ENCODE measurements at regions of chr15 and their contacts with region 1.

Region 1: DNA sequence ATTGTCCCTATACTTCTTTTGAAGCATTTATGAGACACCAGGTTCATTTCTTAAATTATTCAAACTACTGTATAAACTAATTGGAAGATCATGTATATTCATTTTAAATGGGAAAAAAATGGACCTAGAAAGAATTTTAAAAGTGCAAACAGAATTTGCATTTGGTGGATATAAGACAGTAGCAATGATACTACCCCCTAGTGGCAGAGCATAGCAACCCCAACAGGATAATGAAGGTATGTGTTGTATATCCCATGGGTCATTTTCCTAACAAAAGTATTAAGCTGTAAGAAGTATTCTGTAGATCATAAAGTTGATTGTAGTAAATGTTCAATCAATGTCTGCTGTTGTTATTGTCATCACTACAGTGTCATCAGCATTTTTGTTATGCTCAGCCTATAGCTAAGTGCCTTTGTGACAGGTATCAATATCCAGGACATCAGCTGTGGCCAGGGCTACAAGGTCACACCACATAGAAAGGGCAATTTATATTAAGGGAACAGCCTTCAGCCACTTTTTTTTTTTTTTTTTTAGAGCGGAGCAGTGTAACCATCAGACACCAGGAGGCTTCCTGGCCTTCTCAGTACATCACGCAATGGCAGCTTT is 175.8 kb downstream of the FOXB1 start:
- DNase-seq: no peak
- ATAC-seq: peak; percentile 75
- H3K4me3 ChIP-seq: no peak overlapping the region
- H3K27ac ChIP-seq: no peak overlapping the region
- H3K4me1 ChIP-seq: no peaks in the 10 kb centered on the region
- H3K27me3 ChIP-seq: peaks cover 4% of the 10 kb centered on the region
- CTCF ChIP-seq: peak; percentile 87

Region 2: DNA sequence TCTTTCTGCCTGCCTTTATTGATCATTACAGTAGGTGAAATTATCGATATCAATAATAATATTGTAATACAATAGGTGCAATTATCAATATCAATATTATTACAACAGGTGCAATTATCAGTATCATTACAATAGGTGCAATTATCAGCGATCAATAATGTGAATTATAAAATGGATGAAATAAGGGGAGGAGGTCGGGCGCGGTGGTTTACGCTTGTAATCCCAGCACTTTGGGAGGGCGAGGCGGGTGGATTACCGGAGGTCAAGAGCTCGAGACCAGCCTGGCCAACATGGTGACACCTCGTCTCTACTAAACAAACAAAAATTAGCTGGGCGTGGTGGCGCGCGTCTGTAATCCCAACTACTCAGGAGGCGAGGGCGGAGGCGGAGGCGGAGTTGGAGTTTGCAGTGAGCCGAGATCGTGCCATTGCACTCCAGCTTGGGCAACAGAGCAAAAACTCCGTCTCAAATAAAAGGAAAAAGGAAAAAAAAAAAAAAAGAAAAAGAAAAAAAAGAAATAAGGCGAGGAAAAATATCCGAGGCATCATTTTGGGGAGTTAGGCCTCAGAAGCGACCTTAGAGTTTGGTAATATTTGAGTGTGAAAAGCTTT is 490.2 kb before region 1 on chr15:
- intact Hi-C with region 1: loop called (anchors 10 kb)
- DNase-seq: peak; percentile 95
- ATAC-seq: peak; percentile 65
- H3K4me3 ChIP-seq: peak overlapping the region; percentile 94
- H3K27ac ChIP-seq: peak overlapping the region; percentile 99
- H3K4me1 ChIP-seq: peaks cover 34% of the 10 kb centered on the region
- H3K27me3 ChIP-seq: no peaks in the 10 kb centered on the region
- CTCF ChIP-seq: no peak

Region 3: DNA sequence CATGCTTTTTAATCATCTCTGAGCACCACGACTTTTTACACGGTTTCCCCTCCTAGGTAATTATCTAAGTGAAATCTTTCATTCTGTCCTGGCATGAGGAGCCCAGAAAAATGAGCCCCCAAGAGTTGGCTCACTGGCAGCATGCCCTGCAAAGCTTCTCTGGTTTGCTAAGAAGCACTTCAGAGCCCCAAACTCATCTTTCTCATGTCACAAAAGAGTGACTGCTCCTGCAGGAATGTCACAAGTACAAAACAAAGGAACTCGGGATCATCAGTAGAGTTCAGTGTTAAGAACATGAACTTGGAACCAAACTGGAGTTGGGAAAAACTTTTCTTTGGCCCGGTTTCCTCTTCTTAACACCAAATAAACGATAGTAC is 51.9 kb before region 1 on chr15:
- intact Hi-C with region 1: no loop called
- DNase-seq: no peak
- ATAC-seq: no peak
- H3K4me3 ChIP-seq: peak overlapping the region; percentile 54
- H3K27ac ChIP-seq: peak overlapping the region; percentile 75
- H3K4me1 ChIP-seq: peaks cover 3% of the 10 kb centered on the region
- H3K27me3 ChIP-seq: no peaks in the 10 kb centered on the region
- CTCF ChIP-seq: no peak

Measured in upper lobe of right lung (tissue), 1 donor.